KBM-7 (cell line): ENCODE measurements at regions of chr6 and their contacts with region 1.

Region 1: DNA sequence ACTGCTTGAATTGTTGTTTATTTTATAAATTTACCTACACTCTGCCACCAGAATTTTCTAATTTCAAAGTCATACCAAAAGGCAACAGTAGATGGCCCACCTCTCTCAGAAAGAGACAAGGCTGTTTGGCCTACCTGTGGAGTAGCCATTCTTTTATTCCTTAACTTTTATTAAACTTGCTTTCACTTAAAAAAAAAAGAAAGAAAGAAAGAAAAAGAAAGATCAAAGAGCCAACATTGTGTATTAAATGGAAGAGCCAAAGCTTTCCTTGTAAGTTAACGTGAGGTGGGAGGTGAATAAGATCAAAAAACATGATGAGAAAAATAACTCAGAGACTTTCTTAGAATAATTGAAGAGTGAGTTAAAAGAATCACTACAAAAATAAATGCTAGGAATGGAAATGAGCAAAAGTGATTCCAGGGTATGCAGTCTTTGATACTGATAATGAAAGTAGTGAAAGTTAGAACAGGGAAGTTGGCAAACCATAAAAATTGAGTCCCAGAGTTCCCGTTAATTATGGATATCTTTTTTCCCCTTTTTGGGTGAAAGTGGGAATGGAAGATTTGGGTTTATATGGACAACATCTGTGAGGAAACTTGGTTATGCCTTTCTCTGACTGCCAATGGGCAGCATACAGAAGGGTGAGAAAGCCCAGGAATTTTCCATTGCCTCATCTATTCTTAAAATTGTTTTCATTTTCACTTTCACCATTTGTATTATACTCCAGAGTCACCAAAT is 35.9 kb upstream of the MYB start:
- DNase-seq: peak; percentile 70

Region 2: GRCh38 chr6:134967711-134968110 is 177.5 kb before region 1 on chr6:
- in situ Hi-C with region 1: no loop called
- DNase-seq: no peak

Region 3: DNA sequence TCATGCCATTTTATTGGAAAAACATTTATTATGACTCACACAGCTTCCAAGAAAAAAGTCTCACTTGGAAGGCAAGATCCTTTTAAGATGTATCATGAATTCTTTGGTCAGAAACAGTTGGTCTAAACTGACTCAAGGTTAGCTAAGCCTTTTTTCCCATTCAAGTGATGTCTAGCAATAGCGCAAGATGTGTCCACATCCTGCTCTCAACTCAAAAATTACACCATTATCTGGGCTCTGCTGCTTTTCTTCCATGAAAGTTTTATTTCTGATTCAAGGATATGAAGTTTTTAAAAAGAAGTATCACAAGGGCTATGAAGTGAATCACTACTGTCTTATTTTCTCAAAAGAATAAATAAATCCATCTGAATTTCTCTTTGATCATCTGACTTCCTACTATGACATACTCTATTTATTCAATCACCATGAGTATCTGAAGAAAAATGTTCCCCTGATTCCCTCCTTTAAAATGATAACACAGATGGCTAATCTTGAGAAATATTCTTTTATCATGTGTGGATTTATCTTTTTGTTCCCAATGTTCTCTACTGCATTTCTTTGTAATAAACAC is 213.1 kb after region 1 on chr6:
- in situ Hi-C with region 1: no loop called
- DNase-seq: no peak

Region 4: DNA sequence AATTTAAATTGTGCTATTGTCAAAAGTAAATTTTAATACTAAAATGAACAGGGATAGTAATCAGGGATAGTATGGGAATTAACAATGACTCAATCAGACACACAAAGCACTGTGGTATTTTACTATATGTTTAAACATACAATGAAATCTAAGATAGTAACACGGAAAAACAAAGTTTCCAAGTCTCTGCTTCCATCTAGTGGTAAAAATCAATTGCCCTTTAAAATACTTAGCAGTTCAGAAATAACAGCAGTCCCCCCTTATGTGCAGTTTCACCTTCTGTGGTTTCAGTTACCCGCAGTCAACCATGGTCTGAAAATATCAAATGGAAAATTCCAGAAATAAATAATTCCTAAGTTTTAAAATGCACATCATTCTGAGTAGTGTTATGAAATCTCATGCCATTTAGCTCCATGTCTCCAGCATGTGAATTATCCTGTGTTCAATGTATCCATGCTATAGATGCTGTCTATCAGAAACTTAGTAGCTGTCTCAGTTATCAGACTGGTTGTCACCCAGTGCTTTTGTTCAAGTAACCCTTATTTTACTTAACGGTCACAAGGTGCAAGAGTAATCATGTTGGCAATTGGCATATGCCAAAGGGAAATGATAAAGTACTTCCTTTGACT is 293.8 kb after region 1 on chr6:
- in situ Hi-C with region 1: loop called (anchors 25 kb)
- DNase-seq: peak; percentile 78